SK-N-SH (cell line): ENCODE measurements at regions of chr21 and their contacts with region 1.

Region 1: GRCh38 chr21:28745131-28746016 is 247.3 kb downstream of the LTN1 start:
- DNase-seq: peak; percentile 52
- H3K4me3 ChIP-seq: peak overlapping the region; percentile 38 to 47
- H3K27ac ChIP-seq: peak overlapping the region; percentile 22 to 81; a peak in 3 of 4 replicates
- H3K4me1 ChIP-seq: peaks cover 0 to 15% of the 10 kb centered on the region in 2 experiments; a peak in 2 of 4 replicates
- H3K27me3 ChIP-seq: no peaks in the 10 kb centered on the region
- CTCF ChIP-seq: peak; percentile 91
- EP300 ChIP-seq: peak in 1 of 2 experiments; percentile 38; a peak in 1 of 4 replicates
- RAD21 ChIP-seq: peak; percentile 100

Region 2: GRCh38 chr21:26842976-26843932 is 1902.1 kb before region 1 on chr21:
- CTCF ChIA-PET with region 1: interaction called, 92 read pairs
- POLR2A ChIA-PET with region 1: interaction called, 10 read pairs
- DNase-seq: peak; percentile 72
- H3K4me3 ChIP-seq: peak overlapping the region; percentile 89 to 91
- H3K27ac ChIP-seq: peak overlapping the region; percentile 78 to 85
- H3K4me1 ChIP-seq: peaks cover 25 to 29% of the 10 kb centered on the region in 2 experiments; a peak in 3 of 4 replicates
- H3K27me3 ChIP-seq: no peaks in the 10 kb centered on the region
- CTCF ChIP-seq: peak; percentile 42
- EP300 ChIP-seq: peak in 1 of 2 experiments; percentile 18; a peak in 1 of 4 replicates
- RAD21 ChIP-seq: no peak

Region 3: GRCh38 chr21:27564684-27565301 is 1180.6 kb before region 1 on chr21:
- CTCF ChIA-PET with region 1: interaction called, 11 read pairs
- POLR2A ChIA-PET with region 1: no interaction called
- DNase-seq: peak; percentile 36
- H3K4me3 ChIP-seq: no peak overlapping the region; a peak in 1 of 4 replicates
- H3K27ac ChIP-seq: peak overlapping the region in 1 of 2 experiments; percentile 75; a peak in 3 of 4 replicates
- H3K4me1 ChIP-seq: peaks cover 0 to 17% of the 10 kb centered on the region in 2 experiments; a peak in 2 of 4 replicates
- H3K27me3 ChIP-seq: no peaks in the 10 kb centered on the region
- CTCF ChIP-seq: peak; percentile 85
- EP300 ChIP-seq: no peak
- RAD21 ChIP-seq: peak; percentile 87

Region 4: GRCh38 chr21:28269173-28269572 is 476.2 kb before region 1 on chr21:
- CTCF ChIA-PET with region 1: interaction called, 11 read pairs
- POLR2A ChIA-PET with region 1: no interaction called
- DNase-seq: peak; percentile 53
- H3K4me3 ChIP-seq: no peak overlapping the region; a peak in 1 of 4 replicates
- H3K27ac ChIP-seq: peak overlapping the region; percentile 9 to 97; a peak in 3 of 4 replicates
- H3K4me1 ChIP-seq: peaks cover 0 to 8% of the 10 kb centered on the region in 2 experiments; a peak in 2 of 4 replicates
- H3K27me3 ChIP-seq: no peaks in the 10 kb centered on the region
- CTCF ChIP-seq: no peak
- EP300 ChIP-seq: peak; percentile 37 to 100; a peak in 3 of 4 replicates
- RAD21 ChIP-seq: peak; percentile 52; the same call in 1 of the 2 replicates

Region 5: GRCh38 chr21:28516991-28517592 is 228.3 kb before region 1 on chr21:
- CTCF ChIA-PET with region 1: interaction called, 19 read pairs
- POLR2A ChIA-PET with region 1: no interaction called
- DNase-seq: peak; percentile 47
- H3K4me3 ChIP-seq: peak overlapping the region in 1 of 2 experiments; percentile 28; a peak in 2 of 4 replicates
- H3K27ac ChIP-seq: peak overlapping the region in 1 of 2 experiments; percentile 86; a peak in 2 of 4 replicates
- H3K4me1 ChIP-seq: peaks cover 8 to 11% of the 10 kb centered on the region in 2 experiments; a peak in 3 of 4 replicates
- H3K27me3 ChIP-seq: no peaks in the 10 kb centered on the region
- CTCF ChIP-seq: peak; percentile 67
- EP300 ChIP-seq: no peak
- RAD21 ChIP-seq: peak; percentile 60

Region 6: GRCh38 chr21:28938726-28939125 is 193.4 kb after region 1 on chr21:
- CTCF ChIA-PET with region 1: interaction called, 29 read pairs
- POLR2A ChIA-PET with region 1: no interaction called
- DNase-seq: peak; percentile 25
- H3K4me3 ChIP-seq: no peak overlapping the region
- H3K27ac ChIP-seq: peak overlapping the region in 1 of 2 experiments; percentile 76; a peak in 2 of 4 replicates
- H3K4me1 ChIP-seq: peaks cover 3 to 9% of the 10 kb centered on the region in 2 experiments; a peak in 2 of 4 replicates
- H3K27me3 ChIP-seq: no peaks in the 10 kb centered on the region
- CTCF ChIP-seq: no peak
- EP300 ChIP-seq: peak in 1 of 2 experiments; percentile 72; a peak in 1 of 4 replicates
- RAD21 ChIP-seq: no peak